Mammary epithelial cell (primary cell): ENCODE measurements at regions of chr13 and their contacts with region 1.

Region 1: GRCh38 chr13:46492946-46493345 is 60.0 kb upstream of the LRCH1 start:
- DNase-seq: peak; percentile 16
- H3K4me3 ChIP-seq: no peak overlapping the region
- H3K27ac ChIP-seq: no peak overlapping the region
- H3K4me1 ChIP-seq: peaks cover 3% of the 10 kb centered on the region
- H3K27me3 ChIP-seq: no peaks in the 10 kb centered on the region
- CTCF ChIP-seq: peak; percentile 41 to 63

Region 2: GRCh38 chr13:46712524-46712923 is 219.6 kb after region 1 on chr13:
- CTCF ChIA-PET with region 1: interaction called, 5 read pairs
- dilution Hi-C with region 1: no loop called
- in situ Hi-C with region 1: loop called in 1 of 2 experiments (anchors 10 kb)
- intact Hi-C with region 1: no loop called
- DNase-seq: no peak
- H3K4me3 ChIP-seq: no peak overlapping the region
- H3K27ac ChIP-seq: no peak overlapping the region
- H3K4me1 ChIP-seq: no peaks in the 10 kb centered on the region
- H3K27me3 ChIP-seq: no peaks in the 10 kb centered on the region
- CTCF ChIP-seq: no peak